ENCODE measurements at regions of chr3 and their contacts with region 1.

Region 1: GRCh38 chr3:57370341-57370740 is 77.9 kb upstream of the ASB14 start:
- DNase-seq: no peak
- H3K4me3 Mint-ChIP-seq: no peak overlapping the region
- H3K27ac Mint-ChIP-seq: no peak overlapping the region
- H3K4me1 Mint-ChIP-seq: no peaks in the 10 kb centered on the region
- H3K27me3 Mint-ChIP-seq: peaks cover 19% of the 10 kb centered on the region

Region 2: GRCh38 chr3:56855856-56856512 is 514.4 kb before region 1 on chr3:
- intact Hi-C with region 1: no loop called
- DNase-seq: no peak
- H3K4me3 Mint-ChIP-seq: no peak overlapping the region
- H3K27ac Mint-ChIP-seq: no peak overlapping the region
- H3K4me1 Mint-ChIP-seq: peaks cover 48% of the 10 kb centered on the region
- H3K27me3 Mint-ChIP-seq: peaks cover 2% of the 10 kb centered on the region

Region 3: DNA sequence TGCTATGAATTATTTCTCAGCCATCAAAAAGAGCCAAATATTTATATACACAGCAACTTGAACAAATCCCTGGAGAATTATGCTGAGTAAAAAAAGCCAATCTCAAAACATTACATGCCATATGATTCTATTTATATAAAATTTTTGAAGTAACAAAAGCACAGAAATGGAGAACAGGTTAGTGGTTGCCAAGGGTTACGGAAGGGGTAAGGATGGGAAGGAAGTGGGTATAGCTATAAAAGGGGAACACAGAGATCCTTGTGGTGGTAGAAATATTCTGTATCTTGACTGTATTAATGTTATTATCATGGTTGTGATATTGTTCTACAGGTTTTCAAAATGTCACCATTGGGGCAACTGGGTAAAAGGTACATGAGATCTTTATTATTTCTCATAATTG is 15.6 kb before region 1 on chr3:
- intact Hi-C with region 1: loop called (anchors 1 kb)
- DNase-seq: no peak
- H3K4me3 Mint-ChIP-seq: no peak overlapping the region
- H3K27ac Mint-ChIP-seq: no peak overlapping the region
- H3K4me1 Mint-ChIP-seq: no peaks in the 10 kb centered on the region
- H3K27me3 Mint-ChIP-seq: peaks cover 2% of the 10 kb centered on the region